Tibial artery (tissue), 4 donors: ENCODE measurements at regions of chr10 and their contacts with region 1.

Region 1: GRCh38 chr10:48811917-48812316 is 127.2 kb downstream of the WDFY4 start:
- DNase-seq: no peak
- H3K4me3 ChIP-seq: no peak overlapping the region
- H3K27ac ChIP-seq: no peak overlapping the region
- H3K4me1 ChIP-seq: no peaks in the 10 kb centered on the region
- H3K27me3 ChIP-seq: no peaks in the 10 kb centered on the region
- CTCF ChIP-seq: no peak

Region 2: GRCh38 chr10:48844616-48845015 is 32.7 kb after region 1 on chr10:
- intact Hi-C with region 1: loop called (anchors 2 kb)
- DNase-seq: no peak
- H3K4me3 ChIP-seq: no peak overlapping the region
- H3K27ac ChIP-seq: no peak overlapping the region
- H3K4me1 ChIP-seq: no peaks in the 10 kb centered on the region
- H3K27me3 ChIP-seq: no peaks in the 10 kb centered on the region
- CTCF ChIP-seq: no peak